ENCODE measurements at regions of chr12 and their contacts with region 1.

Region 1: DNA sequence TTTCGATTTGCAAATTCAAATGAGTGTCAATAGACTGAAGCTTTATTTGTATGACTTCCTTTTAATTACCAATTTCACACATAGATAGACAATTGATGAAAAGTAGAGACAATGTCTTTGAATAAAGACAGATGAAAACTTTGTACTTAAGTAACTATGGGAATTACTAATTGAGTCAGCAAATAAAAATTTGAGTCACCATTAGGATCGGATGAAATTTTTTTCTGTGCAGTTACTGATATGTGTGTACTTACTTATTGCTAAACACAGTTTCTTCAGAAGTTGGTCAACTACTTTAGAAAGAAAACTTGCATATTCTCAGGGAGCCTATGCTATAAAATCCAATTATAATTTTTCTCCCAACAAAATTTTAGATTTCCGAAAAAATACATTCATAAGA is 224.9 kb upstream of the SLC16A7 start:
- DNase-seq: peak; percentile 59
- ATAC-seq: peak; percentile 67
- H3K4me3 ChIP-seq: no peak overlapping the region
- H3K27ac ChIP-seq: no peak overlapping the region
- H3K4me1 ChIP-seq: peaks cover 7% of the 10 kb centered on the region; the same call in 1 of the 2 replicates
- H3K27me3 ChIP-seq: no peaks in the 10 kb centered on the region
- CTCF ChIP-seq: no peak

Region 2: GRCh38 chr12:59173686-59174085 is 197.2 kb before region 1 on chr12:
- CTCF ChIA-PET with region 1: no interaction called
- POLR2A ChIA-PET with region 1: no interaction called
- intact Hi-C with region 1: loop called (anchors 1 kb)
- DNase-seq: peak; percentile 13
- ATAC-seq: peak; percentile 73
- H3K4me3 ChIP-seq: no peak overlapping the region
- H3K27ac ChIP-seq: no peak overlapping the region
- H3K4me1 ChIP-seq: peaks cover 3% of the 10 kb centered on the region; the same call in 1 of the 2 replicates
- H3K27me3 ChIP-seq: no peaks in the 10 kb centered on the region
- CTCF ChIP-seq: peak; percentile 48